Panc1 (cell line): ENCODE measurements at regions of chr11 and their contacts with region 1.

Region 1: GRCh38 chr11:93895106-93895862 is 44.9 kb upstream of the VSTM5 start:
- DNase-seq: peak; percentile 8
- ATAC-seq: peak; percentile 92
- H3K4me3 ChIP-seq: no peak overlapping the region
- H3K27ac ChIP-seq: no peak overlapping the region
- H3K4me1 ChIP-seq: no peaks in the 10 kb centered on the region
- H3K27me3 ChIP-seq: peaks cover 7% of the 10 kb centered on the region; the same call in 1 of the 2 replicates
- CTCF ChIP-seq: peak; percentile 83

Region 2: DNA sequence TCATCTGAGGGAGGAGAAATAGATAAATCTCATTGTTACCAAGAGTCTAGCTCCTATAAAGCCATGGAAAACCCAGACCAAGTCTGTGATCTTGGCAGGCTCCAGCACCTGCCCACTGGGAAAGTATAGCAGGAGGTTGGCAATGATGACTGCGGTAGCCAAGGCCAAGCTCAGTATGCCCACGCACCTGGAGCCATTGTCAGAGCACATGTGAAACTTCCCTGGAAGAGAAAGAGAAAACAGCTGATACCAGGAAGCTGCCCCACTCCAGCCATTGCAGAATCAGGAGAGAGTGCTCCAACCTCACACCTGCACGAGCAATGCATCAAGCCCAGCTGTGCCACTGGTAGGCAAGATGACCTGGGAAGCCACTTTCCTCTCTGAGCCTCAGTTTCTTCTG is 63.7 kb after region 1 on chr11:
- CTCF ChIA-PET with region 1: no interaction called
- POLR2A ChIA-PET with region 1: no interaction called
- in situ Hi-C with region 1: no loop called
- intact Hi-C with region 1: no loop called
- DNase-seq: no peak
- ATAC-seq: no peak
- H3K4me3 ChIP-seq: no peak overlapping the region
- H3K27ac ChIP-seq: no peak overlapping the region
- H3K4me1 ChIP-seq: no peaks in the 10 kb centered on the region
- H3K27me3 ChIP-seq: 0 out of 2 replicates have a peak, but pooled peaks cover 3% of the 10 kb centered on the region
- CTCF ChIP-seq: no peak

Region 3: GRCh38 chr11:94107363-94107762 is 212.1 kb after region 1 on chr11:
- CTCF ChIA-PET with region 1: interaction called, 3 read pairs
- POLR2A ChIA-PET with region 1: no interaction called
- in situ Hi-C with region 1: no loop called
- intact Hi-C with region 1: loop called (anchors 5 kb)
- DNase-seq: no peak
- ATAC-seq: no peak
- H3K4me3 ChIP-seq: no peak overlapping the region
- H3K27ac ChIP-seq: no peak overlapping the region
- H3K4me1 ChIP-seq: no peaks in the 10 kb centered on the region
- H3K27me3 ChIP-seq: peaks cover 21% of the 10 kb centered on the region
- CTCF ChIP-seq: peak; percentile 27; the same call in 1 of the 2 replicates

Region 4: DNA sequence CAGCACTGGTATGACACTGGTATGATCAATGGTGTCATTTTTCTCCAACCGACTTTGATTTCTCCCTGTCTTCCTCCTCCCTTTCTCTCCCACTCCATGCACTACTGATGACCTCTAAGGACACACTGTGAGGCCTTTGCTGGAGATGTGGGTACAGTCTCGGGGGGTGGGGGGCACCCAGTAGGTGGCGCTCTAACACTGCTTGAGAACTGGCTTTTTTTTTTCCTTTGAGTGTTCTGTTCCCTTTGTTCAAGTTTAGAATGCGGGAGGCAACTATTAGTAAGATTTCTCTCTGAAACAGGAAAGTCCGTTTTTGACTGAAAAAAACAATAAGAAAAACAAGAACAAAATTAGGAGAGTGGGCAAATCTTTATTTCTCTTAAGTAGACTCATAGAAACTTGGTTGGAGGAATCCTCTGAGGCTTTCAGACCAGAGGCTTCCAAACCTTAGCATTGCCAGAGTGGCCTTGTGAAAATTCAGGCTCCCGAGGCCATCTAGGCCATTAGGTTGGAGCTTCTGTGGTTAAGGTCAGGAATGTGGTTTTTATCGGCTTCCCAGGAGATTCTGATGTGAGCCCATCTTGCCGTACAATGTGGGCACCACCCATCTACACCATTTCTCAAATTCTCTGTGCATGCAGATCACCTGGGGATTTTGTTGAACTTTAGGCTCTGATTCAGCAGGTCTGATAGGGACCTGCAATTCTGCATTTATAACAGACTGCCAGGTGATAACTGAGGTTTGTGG is 276.6 kb after region 1 on chr11:
- CTCF ChIA-PET with region 1: interaction called, 5 read pairs
- POLR2A ChIA-PET with region 1: no interaction called
- in situ Hi-C with region 1: no loop called
- intact Hi-C with region 1: loop called (anchors 10 kb)
- DNase-seq: peak; percentile 8
- ATAC-seq: peak; percentile 78
- H3K4me3 ChIP-seq: no peak overlapping the region
- H3K27ac ChIP-seq: no peak overlapping the region
- H3K4me1 ChIP-seq: no peaks in the 10 kb centered on the region
- H3K27me3 ChIP-seq: no peaks in the 10 kb centered on the region
- CTCF ChIP-seq: peak; percentile 95

Region 5: DNA sequence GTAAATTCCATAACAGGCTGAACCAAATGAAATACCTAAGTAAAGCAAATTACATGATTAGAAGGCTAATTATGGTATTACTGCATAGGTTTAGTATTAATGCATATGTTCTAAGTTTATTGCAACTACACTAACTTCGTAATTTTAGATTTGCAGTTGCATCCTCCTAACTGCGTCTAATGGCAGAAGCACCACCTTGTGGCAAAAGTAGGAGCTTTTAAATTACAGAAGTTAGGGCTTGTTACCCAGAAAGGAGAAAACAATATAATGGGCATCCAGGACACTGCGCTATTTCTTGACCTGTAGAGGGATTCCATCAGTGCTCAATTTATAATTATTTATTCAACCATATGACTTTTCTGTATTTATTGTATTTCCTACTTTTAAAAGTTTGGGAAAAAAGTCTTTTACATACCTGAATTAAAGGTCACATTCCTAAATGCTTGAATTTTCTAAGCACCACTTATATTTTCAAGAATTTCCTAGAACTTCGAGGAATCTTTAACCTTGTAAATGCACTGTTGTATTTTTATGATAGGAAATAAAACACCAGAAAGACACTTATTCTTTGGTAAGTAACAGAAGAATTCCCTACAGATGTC is 522.2 kb after region 1 on chr11:
- CTCF ChIA-PET with region 1: interaction called, 4 read pairs
- POLR2A ChIA-PET with region 1: no interaction called
- in situ Hi-C with region 1: no loop called
- intact Hi-C with region 1: loop called (anchors 5 kb)
- DNase-seq: no peak
- ATAC-seq: peak; percentile 80
- H3K4me3 ChIP-seq: no peak overlapping the region
- H3K27ac ChIP-seq: no peak overlapping the region
- H3K4me1 ChIP-seq: no peaks in the 10 kb centered on the region
- H3K27me3 ChIP-seq: no peaks in the 10 kb centered on the region
- CTCF ChIP-seq: peak; percentile 64; the same call in 1 of the 2 replicates

Region 6: GRCh38 chr11:94477589-94477988 is 582.3 kb after region 1 on chr11:
- CTCF ChIA-PET with region 1: interaction called, 22 read pairs
- POLR2A ChIA-PET with region 1: no interaction called
- in situ Hi-C with region 1: no loop called
- intact Hi-C with region 1: no loop called
- DNase-seq: no peak
- ATAC-seq: no peak
- H3K4me3 ChIP-seq: no peak overlapping the region
- H3K27ac ChIP-seq: no peak overlapping the region
- H3K4me1 ChIP-seq: no peaks in the 10 kb centered on the region
- H3K27me3 ChIP-seq: no peaks in the 10 kb centered on the region
- CTCF ChIP-seq: no peak

Region 7: GRCh38 chr11:94504689-94505293 is 609.5 kb after region 1 on chr11:
- CTCF ChIA-PET with region 1: interaction called, 6 read pairs
- POLR2A ChIA-PET with region 1: no interaction called
- in situ Hi-C with region 1: no loop called
- intact Hi-C with region 1: loop called (anchors 2 kb)
- DNase-seq: no peak
- ATAC-seq: peak; percentile 86
- H3K4me3 ChIP-seq: no peak overlapping the region
- H3K27ac ChIP-seq: no peak overlapping the region
- H3K4me1 ChIP-seq: no peaks in the 10 kb centered on the region
- H3K27me3 ChIP-seq: no peaks in the 10 kb centered on the region
- CTCF ChIP-seq: peak; percentile 77; the same call in 1 of the 2 replicates

Region 8: GRCh38 chr11:94741022-94741679 is 845.9 kb after region 1 on chr11:
- CTCF ChIA-PET with region 1: no interaction called
- POLR2A ChIA-PET with region 1: interaction called, 20 read pairs
- in situ Hi-C with region 1: no loop called
- intact Hi-C with region 1: no loop called
- DNase-seq: peak; percentile 59
- ATAC-seq: peak; percentile 78
- H3K4me3 ChIP-seq: peak overlapping the region; percentile 53 to 69
- H3K27ac ChIP-seq: peak overlapping the region; percentile 66
- H3K4me1 ChIP-seq: peaks cover 54% of the 10 kb centered on the region
- H3K27me3 ChIP-seq: peaks cover 7% of the 10 kb centered on the region; the same call in 1 of the 2 replicates
- CTCF ChIP-seq: peak; percentile 77